Heart right ventricle (tissue), 16 donors: ENCODE measurements at regions of chr3 and their contacts with region 1.

Region 1: DNA sequence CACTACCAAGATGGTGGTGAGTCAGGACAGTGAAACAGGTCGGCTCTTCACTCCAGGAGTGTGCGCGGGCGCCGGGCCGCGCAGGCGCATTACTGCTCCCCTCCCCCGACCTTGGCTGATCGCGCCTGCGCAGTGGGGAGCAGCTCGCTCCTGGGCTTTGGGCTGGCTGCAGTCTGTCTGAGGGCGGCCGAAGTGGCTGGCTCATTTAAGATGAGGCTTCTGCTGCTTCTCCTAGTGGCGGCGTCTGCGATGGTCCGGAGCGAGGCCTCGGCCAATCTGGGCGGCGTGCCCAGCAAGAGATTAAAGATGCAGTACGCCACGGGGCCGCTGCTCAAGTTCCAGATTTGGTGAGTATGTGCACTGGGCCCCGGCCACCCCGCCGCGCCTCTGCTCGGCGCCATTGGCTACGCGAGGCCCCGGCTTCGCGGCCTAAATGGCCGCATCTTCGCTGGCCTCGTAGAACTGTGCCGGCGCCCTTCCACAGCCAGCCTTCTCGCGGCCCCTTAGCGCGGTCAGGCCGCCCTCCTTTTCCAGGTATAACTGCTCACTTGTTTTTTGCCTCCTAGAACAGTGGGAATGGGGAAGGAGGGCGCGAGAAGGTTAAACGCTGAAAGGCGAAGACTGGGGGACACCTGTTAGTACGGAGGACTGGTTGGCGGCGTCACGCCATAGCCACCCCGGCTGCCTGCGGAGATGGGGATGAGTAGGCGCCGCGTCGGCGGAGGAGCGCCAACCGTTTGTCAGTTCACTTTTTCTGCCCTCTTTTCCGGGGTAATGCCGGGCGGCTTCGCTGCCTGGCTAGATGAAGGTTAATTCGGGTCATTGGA is at the start of gene SELENOT:
- DNase-seq: peak; percentile 94 to 96
- ATAC-seq: peak; percentile 95 to 99 (median 98)
- H3K4me3 ChIP-seq: peak within 1 kb of the TSS; percentile 45 to 91 (median 80)
- H3K27ac ChIP-seq: peak within 1 kb of the TSS; percentile 92 to 99 (median 96)
- H3K4me1 ChIP-seq: peaks cover 0 to 69% (median 43%) of the 10 kb centered on the region in 9 donors
- H3K27me3 ChIP-seq: no peaks in the 10 kb centered on the region
- CTCF ChIP-seq: peak in 5 of 9 donors; percentile 30 to 51 (median 45)
- total RNA-seq, gene SELENOT: 63.8 to 88.2 (median 76.1) TPM

Region 2: GRCh38 chr3:148991194-148992026 is 1612.0 kb before region 1 on chr3 and contains the start of gene GYG1:
- intact Hi-C with region 1: loop called in 1 of 10 experiments (anchors 10 kb)
- DNase-seq: peak; percentile 76 to 86
- ATAC-seq: peak; percentile 93 to 98 (median 95)
- H3K4me3 ChIP-seq: peak within 1 kb of the TSS; percentile 70 to 99 (median 94)
- H3K27ac ChIP-seq: peak within 1 kb of the TSS; percentile 94 to 99 (median 98)
- H3K4me1 ChIP-seq: peaks cover 0 to 31% (median 18%) of the 10 kb centered on the region in 9 donors
- H3K27me3 ChIP-seq: no peaks in the 10 kb centered on the region
- CTCF ChIP-seq: peak in 7 of 9 donors; percentile 23 to 68 (median 43)
- total RNA-seq, gene GYG1: 126 to 210 (median 157) TPM

Region 3: DNA sequence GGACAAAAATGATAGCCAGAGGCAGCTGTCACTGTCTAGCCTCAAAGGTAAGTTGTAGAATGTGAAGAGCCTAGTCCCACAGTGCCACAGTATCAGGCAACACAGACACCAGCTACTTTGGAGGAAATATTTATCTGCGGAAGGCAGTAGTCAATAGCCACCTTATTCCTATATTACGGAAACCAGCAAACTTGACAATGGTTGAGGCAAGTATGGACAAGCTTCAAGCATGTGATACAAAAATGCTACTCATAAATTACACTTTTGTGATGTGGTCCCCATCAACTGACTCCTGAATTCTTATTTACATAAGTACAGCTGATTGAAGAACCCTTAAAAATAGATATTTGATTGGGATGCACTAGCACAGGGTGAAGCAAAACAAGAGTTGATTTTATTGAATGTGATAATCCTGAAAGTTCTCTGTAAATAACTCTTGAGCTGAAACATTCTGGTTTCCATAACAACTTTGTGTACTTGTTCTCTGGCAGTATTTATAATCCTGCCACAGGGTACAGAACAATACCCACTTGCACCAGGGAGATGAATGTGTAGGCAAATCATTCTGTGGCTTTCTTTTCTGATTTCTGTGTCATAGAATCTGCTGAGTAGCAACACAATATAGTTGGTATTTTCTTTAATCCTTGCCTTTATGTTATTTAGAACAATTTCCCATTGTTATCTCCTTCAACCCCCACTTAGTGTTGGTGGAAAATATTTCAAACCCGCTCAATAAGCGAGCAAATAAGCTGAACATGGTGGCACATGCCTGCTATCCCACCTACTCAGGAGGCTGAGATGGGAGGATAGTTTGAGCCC is 810.7 kb before region 1 on chr3 and contains the start of gene ANKUB1:
- intact Hi-C with region 1: no loop called
- DNase-seq: no peak
- ATAC-seq: no peak
- H3K4me3 ChIP-seq: no peak within 1 kb of the TSS
- H3K27ac ChIP-seq: no peak within 1 kb of the TSS
- H3K4me1 ChIP-seq: no peaks in the 10 kb centered on the region
- H3K27me3 ChIP-seq: peaks cover 0 to 30% (median 7%) of the 10 kb centered on the region in 7 donors
- CTCF ChIP-seq: no peak
- total RNA-seq, gene ANKUB1: not detected

Region 4: DNA sequence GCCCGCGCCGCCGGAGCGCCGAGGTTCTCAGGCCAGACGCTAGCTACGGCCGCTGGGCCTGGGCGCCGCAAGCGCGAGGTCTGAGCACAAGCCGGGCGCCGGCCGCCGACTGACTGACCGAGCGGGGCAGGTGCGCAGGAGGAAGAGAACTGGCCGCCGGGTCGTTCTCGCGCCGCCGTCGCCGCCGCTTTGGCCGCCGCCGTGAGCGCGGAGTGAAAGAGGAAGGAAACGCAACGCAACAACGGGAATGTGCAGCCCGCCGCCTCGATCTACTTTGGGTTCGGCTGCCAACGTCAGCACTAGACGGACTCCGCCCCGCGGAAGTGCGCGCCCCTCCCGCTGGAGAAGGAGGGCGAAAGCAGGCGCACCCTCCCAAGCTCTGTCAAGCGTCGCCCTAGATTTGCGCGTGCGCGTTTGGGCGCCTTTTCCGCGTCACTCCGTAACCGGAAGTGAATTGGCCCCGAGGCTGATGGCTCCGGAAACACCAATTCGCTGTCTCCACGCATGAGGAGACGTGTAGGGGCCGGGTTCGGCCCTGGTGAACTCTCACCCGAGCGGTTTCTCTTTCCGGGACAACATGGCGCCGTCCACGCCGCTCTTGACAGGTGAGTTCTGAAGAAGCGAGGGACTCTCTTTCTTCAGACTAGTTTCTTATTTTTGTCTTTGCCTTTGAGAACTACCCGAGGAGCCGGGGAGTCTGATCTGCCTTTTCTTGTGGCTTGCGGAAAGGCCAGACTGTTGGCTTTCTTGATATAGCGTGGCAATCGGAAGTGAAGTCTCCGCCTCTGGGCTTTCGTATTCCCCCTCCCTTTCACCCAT is 56.9 kb before region 1 on chr3 and contains the starts of genes EIF2A and SERP1:
- intact Hi-C with region 1: loop called in 2 of 10 experiments (anchors 1 to 5 kb)
- DNase-seq: peak; percentile 98 to 99
- ATAC-seq: peak; percentile 97 to 99 (median 98)
- H3K4me3 ChIP-seq: peak within 1 kb of the TSS; percentile 80 to 92 (median 88)
- H3K27ac ChIP-seq: peak within 1 kb of the TSS; percentile 92 to 99 (median 99)
- H3K4me1 ChIP-seq: peaks cover 3 to 52% (median 33%) of the 10 kb centered on the region in 9 donors
- H3K27me3 ChIP-seq: no peaks in the 10 kb centered on the region
- CTCF ChIP-seq: no peak
- total RNA-seq, gene EIF2A: 67.5 to 86.5 (median 76.2) TPM
- total RNA-seq, gene SERP1: 17.5 to 33.7 (median 21.9) TPM